Left lung (tissue), 14 donors: ENCODE measurements at regions of chr17 and their contacts with region 1.

Region 1: GRCh38 chr17:68539548-68540467 is 27.6 kb downstream of the PRKAR1A start:
- DNase-seq: peak in 2 of 4 donors; percentile 57 to 58
- ATAC-seq: peak; percentile 61
- H3K4me3 ChIP-seq: no peak overlapping the region
- H3K27ac ChIP-seq: peak overlapping the region; percentile 20 to 26
- H3K4me1 ChIP-seq: peaks cover 8 to 20% of the 10 kb centered on the region in 2 donors
- H3K27me3 ChIP-seq: no peaks in the 10 kb centered on the region
- CTCF ChIP-seq: no peak

Region 2: GRCh38 chr17:68381076-68381900 is 158.5 kb before region 1 on chr17:
- intact Hi-C with region 1: no loop called
- DNase-seq: peak in 1 of 4 donors; percentile 75
- ATAC-seq: no peak
- H3K4me3 ChIP-seq: no peak overlapping the region
- H3K27ac ChIP-seq: peak overlapping the region in 1 of 2 donors; percentile 63
- H3K4me1 ChIP-seq: peaks cover 23 to 70% of the 10 kb centered on the region in 2 donors
- H3K27me3 ChIP-seq: no peaks in the 10 kb centered on the region
- CTCF ChIP-seq: no peak

Region 3: GRCh38 chr17:68600067-68600930 is 60.5 kb after region 1 on chr17:
- intact Hi-C with region 1: loop called in 1 of 2 experiments (anchors 10 kb)
- DNase-seq: peak in 3 of 4 donors; percentile 67 to 90 (median 67)
- ATAC-seq: peak; percentile 65
- H3K4me3 ChIP-seq: peak overlapping the region; percentile 62 to 66
- H3K27ac ChIP-seq: peak overlapping the region; percentile 89 to 93
- H3K4me1 ChIP-seq: peaks cover 6 to 68% of the 10 kb centered on the region in 2 donors
- H3K27me3 ChIP-seq: peaks cover 0 to 64% of the 10 kb centered on the region in 2 donors
- CTCF ChIP-seq: peak in 1 of 2 donors; percentile 20

Region 4: GRCh38 chr17:68621065-68621464 is 81.3 kb after region 1 on chr17:
- intact Hi-C with region 1: no loop called
- DNase-seq: no peak
- ATAC-seq: no peak
- H3K4me3 ChIP-seq: no peak overlapping the region
- H3K27ac ChIP-seq: no peak overlapping the region
- H3K4me1 ChIP-seq: no peaks in the 10 kb centered on the region
- H3K27me3 ChIP-seq: no peaks in the 10 kb centered on the region
- CTCF ChIP-seq: no peak

Region 5: GRCh38 chr17:68759343-68760132 is 219.7 kb after region 1 on chr17:
- intact Hi-C with region 1: loop called in 1 of 2 experiments (anchors 10 kb)
- DNase-seq: peak; percentile 82 to 94 (median 88)
- ATAC-seq: peak; percentile 100
- H3K4me3 ChIP-seq: peak overlapping the region; percentile 17 to 34
- H3K27ac ChIP-seq: peak overlapping the region; percentile 85 to 88
- H3K4me1 ChIP-seq: peaks cover 7 to 12% of the 10 kb centered on the region in 2 donors
- H3K27me3 ChIP-seq: no peaks in the 10 kb centered on the region
- CTCF ChIP-seq: peak; percentile 80 to 84